Breast epithelium (tissue), 4 donors: ENCODE measurements at regions of chr3 and their contacts with region 1.

Region 1: DNA sequence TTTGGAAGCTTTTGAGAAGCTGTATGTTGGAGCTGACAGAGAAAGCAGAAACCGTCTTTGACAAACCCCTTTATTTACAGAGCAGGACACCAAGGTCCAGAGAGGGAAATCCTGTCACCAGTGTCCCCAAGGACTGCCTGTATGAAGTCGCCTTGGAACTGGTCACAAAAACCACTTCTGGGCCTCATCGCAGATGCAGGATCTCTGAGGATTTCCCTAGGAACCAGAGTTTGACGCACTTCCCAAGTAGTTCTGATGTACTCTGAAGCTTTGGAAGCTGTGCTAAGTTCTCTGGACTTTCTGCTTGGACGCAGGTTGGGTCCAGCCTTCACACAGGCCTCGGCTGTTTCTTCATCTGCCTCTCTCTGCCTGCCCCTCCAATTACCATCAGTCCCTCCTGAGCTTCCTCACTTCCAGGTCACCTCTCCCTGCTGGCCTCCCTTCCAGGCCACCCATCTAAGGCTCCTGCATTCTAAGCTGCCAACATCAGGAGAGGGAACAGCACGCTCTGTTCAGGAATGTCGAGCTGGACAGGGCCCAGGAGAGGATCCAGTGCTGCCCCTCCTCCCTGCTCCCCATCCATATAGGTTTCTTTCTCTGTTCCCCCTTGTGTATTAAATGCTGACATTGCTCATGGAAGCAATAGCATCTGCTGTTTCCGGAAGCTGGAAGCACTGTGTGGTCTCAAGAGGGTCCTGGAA is 270.8 kb downstream of the OPA1 start:
- DNase-seq: no peak
- H3K4me3 ChIP-seq: no peak overlapping the region
- H3K27ac ChIP-seq: no peak overlapping the region
- H3K4me1 ChIP-seq: no peaks in the 10 kb centered on the region
- H3K27me3 ChIP-seq: no peaks in the 10 kb centered on the region
- CTCF ChIP-seq: no peak
- POLR2A ChIP-seq: no peak

Region 2: DNA sequence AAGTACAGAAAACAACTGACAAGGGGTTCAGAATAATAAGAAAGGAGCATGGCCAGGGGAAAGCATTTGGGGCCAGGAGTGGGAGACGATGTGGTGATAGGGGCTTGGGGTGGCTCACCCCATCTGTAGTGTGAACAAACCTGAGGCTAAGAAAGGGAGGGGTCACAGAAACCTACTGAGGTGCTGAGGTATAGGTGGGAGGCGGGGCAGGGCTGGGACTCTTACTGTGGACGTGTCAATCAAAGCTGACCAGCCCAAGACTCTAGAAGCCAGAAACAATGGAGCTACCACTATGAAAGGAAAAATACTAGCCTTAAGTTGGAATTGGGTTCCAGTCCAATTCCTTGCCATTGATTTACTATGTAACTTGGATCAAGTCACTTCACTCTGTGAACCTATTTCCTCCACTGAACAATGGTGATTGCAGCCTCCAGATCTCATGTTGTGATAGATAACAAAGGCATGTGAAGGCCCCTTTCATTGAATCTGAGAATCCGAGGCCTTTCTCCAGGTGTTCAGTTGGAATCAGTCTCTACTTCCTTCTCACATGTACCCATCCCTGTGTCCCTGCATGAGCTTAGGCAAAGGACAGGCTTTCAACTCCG is 11.3 kb after region 1 on chr3:
- intact Hi-C with region 1: loop called (anchors 1 kb)
- DNase-seq: no peak
- H3K4me3 ChIP-seq: no peak overlapping the region
- H3K27ac ChIP-seq: no peak overlapping the region
- H3K4me1 ChIP-seq: no peaks in the 10 kb centered on the region
- H3K27me3 ChIP-seq: no peaks in the 10 kb centered on the region
- CTCF ChIP-seq: no peak
- POLR2A ChIP-seq: no peak

Region 3: GRCh38 chr3:194439881-194440550 is 576.2 kb after region 1 on chr3:
- intact Hi-C with region 1: loop called (anchors 5 kb)
- DNase-seq: no peak
- H3K4me3 ChIP-seq: no peak overlapping the region
- H3K27ac ChIP-seq: no peak overlapping the region
- H3K4me1 ChIP-seq: no peaks in the 10 kb centered on the region
- H3K27me3 ChIP-seq: no peaks in the 10 kb centered on the region
- CTCF ChIP-seq: no peak
- POLR2A ChIP-seq: no peak